ENCODE measurements at regions of chr7 and their contacts with region 1.

Region 1: GRCh38 chr7:114051871-114052331 is 133.1 kb upstream of the PPP1R3A start:
- DNase-seq: no peak
- H3K4me3 ChIP-seq: no peak overlapping the region
- CTCF ChIP-seq: no peak

Region 2: GRCh38 chr7:114021136-114021847 is 30.6 kb before region 1 on chr7:
- in situ Hi-C with region 1: no loop called
- DNase-seq: no peak
- H3K4me3 ChIP-seq: no peak overlapping the region
- CTCF ChIP-seq: no peak

Region 3: DNA sequence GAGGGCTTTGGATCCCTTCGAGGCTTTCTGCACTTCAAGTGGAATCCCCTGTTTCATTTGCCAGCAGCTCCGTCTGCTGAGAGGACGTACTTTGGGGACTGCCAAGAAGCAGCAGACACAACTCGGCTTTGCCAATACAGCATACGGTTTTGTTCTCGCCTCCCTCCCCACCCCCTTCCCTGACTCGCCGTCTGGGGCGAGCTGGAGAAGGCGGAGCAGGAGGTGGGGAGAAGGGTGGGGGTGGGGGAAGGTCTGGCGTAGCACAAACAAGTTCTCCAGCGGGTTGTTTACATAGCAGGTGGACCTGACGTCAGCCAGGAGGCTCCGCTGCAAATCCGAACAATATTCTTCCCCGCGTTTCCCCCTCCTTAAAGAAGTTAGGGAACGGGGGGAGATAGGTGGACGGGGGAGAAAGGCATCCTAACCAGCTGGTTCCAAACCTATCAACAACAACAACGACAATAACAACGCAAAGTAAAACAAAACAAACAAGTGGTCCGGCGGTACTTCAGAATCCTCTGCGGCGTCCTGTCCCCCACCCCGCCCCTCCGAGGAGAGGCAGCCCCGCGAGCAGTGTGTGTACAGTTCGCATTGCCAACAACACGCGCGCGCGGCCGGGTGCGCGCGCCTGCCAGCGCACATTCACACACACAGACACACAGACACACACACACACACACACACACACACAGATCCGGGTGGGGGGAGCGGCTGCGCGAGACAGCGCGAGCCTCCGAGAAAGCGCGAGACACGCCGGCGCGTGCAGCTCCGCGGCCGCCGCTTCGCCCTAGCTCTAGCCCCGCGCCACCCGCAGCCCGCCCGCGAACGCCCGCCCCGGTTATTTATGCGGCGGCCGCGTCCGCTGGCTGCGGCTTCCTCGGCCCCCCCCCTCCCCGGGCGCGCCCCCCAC is 33.9 kb after region 1 on chr7:
- in situ Hi-C with region 1: no loop called
- DNase-seq: no peak
- H3K4me3 ChIP-seq: peak overlapping the region; percentile 72
- CTCF ChIP-seq: no peak

Region 4: DNA sequence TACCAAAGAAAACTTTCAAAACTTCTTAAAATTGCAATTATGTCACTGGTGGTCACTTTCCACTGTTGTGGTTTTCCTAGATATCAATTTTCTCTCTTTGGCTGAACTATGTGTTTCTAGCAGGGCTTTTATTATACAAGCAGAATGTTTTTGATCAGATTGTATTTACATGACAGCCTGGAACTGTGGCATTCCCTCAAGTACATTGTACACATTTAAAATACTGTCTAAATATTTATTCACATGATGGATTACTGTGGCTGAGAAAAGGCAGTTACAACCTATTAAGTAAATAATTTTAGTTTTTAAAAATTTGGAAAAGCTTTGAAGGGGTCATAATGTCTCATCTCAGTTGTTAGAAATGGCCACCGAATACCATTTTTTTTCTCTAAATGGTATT is 98.8 kb after region 1 on chr7:
- in situ Hi-C with region 1: loop called (anchors 5 kb)
- DNase-seq: no peak
- H3K4me3 ChIP-seq: no peak overlapping the region
- CTCF ChIP-seq: no peak